ENCODE measurements at regions of chr10 and their contacts with region 1.

Region 1: DNA sequence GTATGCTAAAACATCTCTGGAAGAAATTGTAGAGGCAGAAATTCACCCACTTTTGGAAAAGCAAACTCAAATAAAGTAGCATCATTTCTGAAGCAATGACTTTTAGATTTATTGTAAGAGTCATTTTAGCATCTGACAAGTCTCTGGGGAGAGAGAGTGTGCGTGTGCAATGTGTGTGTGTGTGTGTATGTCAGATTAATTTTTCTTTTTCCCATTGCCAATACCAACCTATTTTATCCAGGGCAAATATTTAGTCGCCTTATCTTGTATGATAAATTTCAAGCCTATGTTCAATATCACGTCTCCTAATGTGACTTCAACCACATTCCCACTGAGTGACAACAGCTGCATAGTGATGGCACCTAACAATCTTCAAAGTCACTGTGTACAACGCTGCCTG is 101.7 kb downstream of the NEBL start:
- DNase-seq: no peak
- H3K4me3 Mint-ChIP-seq: no peak overlapping the region
- H3K27ac Mint-ChIP-seq: no peak overlapping the region
- H3K4me1 Mint-ChIP-seq: no peaks in the 10 kb centered on the region
- H3K27me3 Mint-ChIP-seq: no peaks in the 10 kb centered on the region

Region 2: GRCh38 chr10:20034732-20035131 is 760.7 kb before region 1 on chr10:
- CTCF ChIA-PET with region 1: no interaction called
- intact Hi-C with region 1: loop called (anchors 10 kb)
- DNase-seq: no peak
- H3K4me3 Mint-ChIP-seq: no peak overlapping the region
- H3K27ac Mint-ChIP-seq: no peak overlapping the region
- H3K4me1 Mint-ChIP-seq: no peaks in the 10 kb centered on the region
- H3K27me3 Mint-ChIP-seq: no peaks in the 10 kb centered on the region

Measured in activated naive CD4-positive, alpha-beta T cell treated with anti-CD3 and anti-CD28 coated beads for 36 hours (primary cell).